Left cardiac atrium (tissue), 4 donors: ENCODE measurements at regions of chr3 and their contacts with region 1.

Region 1: GRCh38 chr3:69553888-69554287 is 168.0 kb upstream of the FRMD4B start:
- DNase-seq: no peak
- ATAC-seq: peak in 1 of 2 donors; percentile 49

Region 2: DNA sequence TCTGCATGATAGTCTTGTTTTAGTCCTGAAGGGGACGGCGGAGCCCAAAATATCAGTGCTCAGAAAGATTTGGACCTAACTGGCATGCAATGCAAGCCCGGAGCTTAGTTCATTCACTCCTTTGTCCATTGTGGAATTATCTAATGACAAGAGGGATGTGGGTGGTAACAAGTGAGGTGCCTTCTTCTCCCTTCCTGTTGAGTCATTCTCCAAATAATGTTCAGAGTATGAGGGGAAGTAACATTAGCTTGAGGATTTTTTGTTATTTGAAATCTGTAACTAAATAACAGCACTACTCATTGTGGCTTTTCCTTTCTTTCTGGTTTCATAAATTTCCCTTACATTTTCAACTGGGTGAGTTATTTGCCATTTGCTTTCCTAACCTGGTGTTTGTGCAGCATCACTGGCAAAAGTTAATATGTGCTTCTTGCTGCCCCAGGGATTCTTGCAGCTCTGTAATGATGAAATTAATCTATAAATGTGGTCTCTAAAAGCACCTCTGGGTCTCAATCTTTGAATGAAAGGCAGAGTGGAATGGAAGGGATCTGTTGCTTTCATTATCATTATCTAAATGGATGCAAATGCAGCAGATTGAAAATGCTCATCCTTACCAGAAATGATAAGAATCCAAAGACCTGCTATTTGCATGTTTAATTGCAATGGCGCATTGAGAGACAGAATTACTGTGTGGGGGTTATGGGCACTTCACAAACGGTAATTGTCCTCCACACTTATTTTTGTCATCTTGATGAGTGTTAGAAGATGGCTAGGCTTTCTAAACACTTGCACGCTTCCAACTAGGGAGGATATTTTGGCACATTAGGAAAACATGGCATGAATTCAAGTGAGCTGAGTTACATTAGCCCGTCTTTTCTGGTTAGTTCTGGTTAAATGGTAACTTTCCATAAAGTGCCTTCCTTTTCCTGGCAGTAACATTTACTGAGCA is 95.5 kb after region 1 on chr3:
- intact Hi-C with region 1: loop called in 1 of 2 experiments (anchors 5 kb)
- DNase-seq: no peak
- ATAC-seq: peak; percentile 84 to 85